Activated naive CD4-positive, alpha-beta T cell treated with anti-CD3 and anti-CD28 coated beads for 36 hours (primary cell): ENCODE measurements at regions of chr19 and their contacts with region 1.

Region 1: GRCh38 chr19:13731147-13731964 is 33.0 kb upstream of the MRI1 start:
- DNase-seq: peak; percentile 95
- H3K4me3 Mint-ChIP-seq: peak overlapping the region; percentile 84
- H3K27ac Mint-ChIP-seq: peak overlapping the region; percentile 94
- H3K4me1 Mint-ChIP-seq: peaks cover 23% of the 10 kb centered on the region
- H3K27me3 Mint-ChIP-seq: no peaks in the 10 kb centered on the region

Region 2: DNA sequence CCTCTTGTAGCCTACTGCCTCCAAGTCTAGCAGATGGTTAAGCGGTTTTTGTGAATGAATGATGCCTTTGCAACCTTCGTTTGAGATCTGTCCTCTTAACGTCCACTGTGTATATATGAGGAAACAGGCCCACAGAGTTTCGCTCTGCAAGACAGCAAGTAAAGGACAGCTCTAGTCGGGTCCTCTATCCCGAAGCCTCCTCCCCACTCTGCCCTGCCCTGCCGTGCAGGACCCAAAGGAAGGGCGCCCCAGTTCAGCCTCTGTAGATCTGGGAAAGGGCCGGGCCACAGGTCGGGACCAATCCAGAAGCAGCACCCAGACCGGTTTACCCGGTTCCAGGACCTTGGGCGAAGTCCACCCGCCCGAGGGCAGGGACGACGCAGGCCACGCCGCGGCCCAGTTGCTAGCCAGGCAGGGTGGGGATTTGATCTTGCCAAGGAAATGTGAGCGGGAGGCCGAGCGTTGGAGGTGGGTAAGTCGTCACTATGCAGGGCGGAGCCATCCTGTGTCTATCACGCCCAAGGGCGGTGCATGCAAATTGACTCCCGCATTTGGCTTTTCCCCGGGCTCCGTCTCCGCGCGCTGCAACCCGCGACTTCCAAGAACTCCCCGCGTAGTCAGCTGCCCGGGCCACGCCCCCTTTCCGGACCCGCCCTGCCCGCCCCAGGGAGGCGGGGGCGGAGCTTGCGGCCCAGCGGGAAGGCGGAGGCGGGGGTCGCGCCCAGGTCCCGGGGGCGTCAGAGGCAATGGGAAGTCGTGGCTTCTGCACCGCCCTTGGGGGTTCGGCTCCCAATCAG is 568.6 kb before region 1 on chr19:
- CTCF ChIA-PET with region 1: no interaction called
- intact Hi-C with region 1: loop called (anchors 5 kb)
- DNase-seq: peak; percentile 98
- H3K4me3 Mint-ChIP-seq: peak overlapping the region; percentile 79
- H3K27ac Mint-ChIP-seq: peak overlapping the region; percentile 97
- H3K4me1 Mint-ChIP-seq: peaks cover 65% of the 10 kb centered on the region
- H3K27me3 Mint-ChIP-seq: no peaks in the 10 kb centered on the region

Region 3: GRCh38 chr19:13747098-13747453 is 15.7 kb after region 1 on chr19:
- CTCF ChIA-PET with region 1: interaction called, 3 read pairs
- intact Hi-C with region 1: loop called (anchors 1 kb)
- DNase-seq: no peak
- H3K4me3 Mint-ChIP-seq: peak overlapping the region; percentile 84
- H3K27ac Mint-ChIP-seq: no peak overlapping the region
- H3K4me1 Mint-ChIP-seq: peaks cover 35% of the 10 kb centered on the region
- H3K27me3 Mint-ChIP-seq: no peaks in the 10 kb centered on the region

Region 4: GRCh38 chr19:13774217-13775191 is 43.1 kb after region 1 on chr19 and contains the start of gene C19orf53:
- CTCF ChIA-PET with region 1: no interaction called
- intact Hi-C with region 1: loop called (anchors 2 kb)
- DNase-seq: peak; percentile 92
- H3K4me3 Mint-ChIP-seq: peak within 1 kb of the TSS; percentile 98
- H3K27ac Mint-ChIP-seq: peak within 1 kb of the TSS; percentile 94
- H3K4me1 Mint-ChIP-seq: peaks cover 19% of the 10 kb centered on the region
- H3K27me3 Mint-ChIP-seq: no peaks in the 10 kb centered on the region
- total RNA-seq, gene C19orf53: 116 to 132 TPM

Region 5: GRCh38 chr19:13794757-13795589 is 63.6 kb after region 1 on chr19 and contains the start of gene ZSWIM4:
- CTCF ChIA-PET with region 1: no interaction called
- intact Hi-C with region 1: loop called (anchors 5 kb)
- DNase-seq: peak; percentile 98
- H3K4me3 Mint-ChIP-seq: peak within 1 kb of the TSS; percentile 95
- H3K27ac Mint-ChIP-seq: peak within 1 kb of the TSS; percentile 86
- H3K4me1 Mint-ChIP-seq: peaks cover 29% of the 10 kb centered on the region
- H3K27me3 Mint-ChIP-seq: no peaks in the 10 kb centered on the region
- total RNA-seq, gene ZSWIM4: 6.7 to 7.1 TPM

Region 6: GRCh38 chr19:13804830-13805683 is 73.7 kb after region 1 on chr19:
- CTCF ChIA-PET with region 1: no interaction called
- intact Hi-C with region 1: no loop called
- DNase-seq: no peak
- H3K4me3 Mint-ChIP-seq: no peak overlapping the region
- H3K27ac Mint-ChIP-seq: no peak overlapping the region
- H3K4me1 Mint-ChIP-seq: no peaks in the 10 kb centered on the region
- H3K27me3 Mint-ChIP-seq: no peaks in the 10 kb centered on the region

Region 7: DNA sequence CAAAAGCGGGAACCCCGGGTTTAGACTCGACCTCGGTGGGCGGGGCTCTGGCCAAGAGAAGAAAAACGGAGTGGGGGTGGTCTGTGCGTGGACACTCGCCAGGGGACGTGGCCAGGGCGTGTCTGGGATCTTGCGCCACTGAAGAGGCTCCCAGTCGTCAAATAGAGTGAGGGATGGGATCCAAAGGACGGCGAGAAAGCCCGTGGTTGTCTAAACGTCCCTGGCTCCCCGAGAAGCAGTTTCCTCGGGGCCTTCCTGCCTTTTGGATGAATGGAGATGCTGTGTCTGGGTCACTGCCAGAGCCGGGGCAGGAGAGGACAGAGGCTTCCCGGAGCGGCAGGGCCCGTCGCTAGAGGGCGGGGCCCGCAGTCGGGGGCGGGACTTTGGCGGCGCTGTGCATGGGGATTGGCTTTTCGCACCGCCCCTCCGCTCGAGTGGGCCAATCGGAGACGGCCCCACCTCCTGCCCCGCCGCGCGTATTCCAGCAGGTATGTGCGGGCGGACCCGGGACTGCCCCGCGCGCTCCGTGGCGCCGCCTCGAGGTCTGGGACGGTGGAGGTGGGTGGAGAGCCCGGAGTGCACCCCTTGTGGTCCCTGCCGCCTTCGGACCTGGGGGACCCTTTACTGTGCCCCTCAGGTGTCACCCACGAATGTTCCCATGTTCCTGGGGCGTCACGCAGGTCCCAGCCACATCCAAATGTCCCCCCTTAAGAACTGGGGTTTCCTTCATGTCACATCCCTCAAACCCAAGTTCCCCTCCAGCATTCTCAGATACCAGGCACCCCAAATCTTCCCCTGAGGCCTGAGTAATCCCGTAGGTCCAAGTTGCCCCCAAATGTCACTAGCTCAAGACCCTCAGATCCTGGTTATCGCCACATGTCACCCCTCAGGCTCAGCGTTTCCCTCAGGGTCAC is 102.2 kb after region 1 on chr19:
- CTCF ChIA-PET with region 1: no interaction called
- intact Hi-C with region 1: loop called (anchors 2 kb)
- DNase-seq: peak; percentile 98
- H3K4me3 Mint-ChIP-seq: peak overlapping the region; percentile 84
- H3K27ac Mint-ChIP-seq: peak overlapping the region; percentile 99
- H3K4me1 Mint-ChIP-seq: peaks cover 35% of the 10 kb centered on the region
- H3K27me3 Mint-ChIP-seq: no peaks in the 10 kb centered on the region